MCF 10A (cell line): ENCODE measurements at regions of chr2 and their contacts with region 1.

Region 1: GRCh38 chr2:68157402-68158133 is at the start of gene PNO1:
- DNase-seq: peak; percentile 95
- H3K4me3 Mint-ChIP-seq: peak within 1 kb of the TSS; percentile 98
- H3K27ac Mint-ChIP-seq: peak within 1 kb of the TSS; percentile 100
- H3K4me1 Mint-ChIP-seq: peaks cover 12% of the 10 kb centered on the region
- H3K27me3 Mint-ChIP-seq: no peaks in the 10 kb centered on the region
- CTCF ChIP-seq: no peak
- total RNA-seq, gene PNO1: 27.9 and 35.0 TPM in 2 replicates

Region 2: DNA sequence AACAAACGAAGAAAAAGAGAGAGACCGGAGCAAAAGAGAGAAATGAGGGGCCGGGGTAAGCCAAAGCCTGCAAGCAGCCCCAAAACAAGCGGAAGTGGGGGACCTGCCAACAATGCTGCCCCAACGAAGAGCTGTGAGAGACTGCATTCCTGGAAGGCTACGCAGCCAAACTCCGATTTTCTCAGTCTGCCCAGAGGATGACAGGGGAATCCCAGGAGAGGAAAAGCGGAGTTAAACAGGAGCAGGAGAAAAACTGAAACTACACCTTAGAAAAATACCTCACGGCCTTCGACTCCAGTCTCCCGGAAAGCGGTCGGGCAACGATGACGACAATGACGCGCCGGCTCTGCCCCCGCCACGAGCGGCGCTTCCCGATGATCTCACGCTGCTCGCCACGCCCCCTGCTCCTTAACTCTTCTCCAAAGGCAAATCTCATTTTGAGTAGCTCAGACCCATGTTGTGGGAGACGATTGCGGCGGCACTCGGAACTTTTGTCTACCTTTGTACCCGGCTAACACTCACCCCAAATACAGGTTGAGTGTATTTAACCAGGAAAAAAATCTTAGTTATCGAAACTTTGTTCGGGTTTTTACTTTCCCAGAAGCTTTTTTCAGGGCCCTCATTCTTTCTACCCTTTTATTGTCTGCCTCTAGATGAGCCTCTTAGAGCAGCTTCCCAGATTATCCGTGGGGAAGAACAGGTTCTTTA is 94.7 kb before region 1 on chr2 and contains the start of gene C1D:
- CTCF ChIA-PET with region 1: no interaction called
- POLR2A ChIA-PET with region 1: interaction called, 12 read pairs
- intact Hi-C with region 1: loop called (anchors 1 kb)
- DNase-seq: peak; percentile 89
- H3K4me3 Mint-ChIP-seq: peak within 1 kb of the TSS; percentile 89
- H3K27ac Mint-ChIP-seq: peak within 1 kb of the TSS; percentile 98
- H3K4me1 Mint-ChIP-seq: peaks cover 23% of the 10 kb centered on the region
- H3K27me3 Mint-ChIP-seq: peaks cover 26% of the 10 kb centered on the region
- CTCF ChIP-seq: no peak
- total RNA-seq, gene C1D: 17.4 and 22.4 TPM in 2 replicates

Region 3: GRCh38 chr2:68169297-68169696 is 11.7 kb after region 1 on chr2:
- CTCF ChIA-PET with region 1: interaction called, 13 read pairs
- POLR2A ChIA-PET with region 1: interaction called, 32 read pairs
- intact Hi-C with region 1: no loop called
- DNase-seq: no peak
- H3K4me3 Mint-ChIP-seq: no peak overlapping the region
- H3K27ac Mint-ChIP-seq: no peak overlapping the region
- H3K4me1 Mint-ChIP-seq: peaks cover 13% of the 10 kb centered on the region
- H3K27me3 Mint-ChIP-seq: no peaks in the 10 kb centered on the region
- CTCF ChIP-seq: no peak

Region 4: DNA sequence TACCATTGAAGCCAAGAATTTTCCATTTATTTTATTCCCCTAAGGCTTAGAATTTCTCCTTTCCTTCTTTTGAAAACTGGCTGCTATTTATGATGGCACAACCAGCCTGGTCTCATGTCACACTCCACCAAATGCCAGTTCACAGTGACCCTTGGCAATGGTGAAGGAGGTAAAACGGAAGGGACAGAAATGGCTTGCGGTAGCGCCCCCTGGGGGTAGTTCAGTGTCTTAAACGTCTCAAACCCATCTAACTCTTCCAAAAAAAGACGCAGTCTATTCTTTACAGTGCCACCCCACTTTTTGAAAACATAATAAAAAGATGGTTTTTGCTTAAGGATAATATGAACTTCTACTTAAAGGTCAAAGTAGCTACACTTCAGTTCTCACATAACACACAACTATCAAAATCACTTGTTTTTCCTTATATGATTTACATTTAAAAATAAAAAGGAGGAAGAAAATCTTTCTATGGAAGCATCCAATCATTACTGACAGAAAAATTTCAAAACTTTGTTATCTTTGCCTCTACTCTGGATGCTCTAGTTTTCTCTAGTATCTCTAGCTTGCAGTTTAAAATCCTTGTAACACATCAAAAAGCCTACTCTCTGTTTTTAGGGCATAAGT is 28.1 kb after region 1 on chr2:
- CTCF ChIA-PET with region 1: interaction called, 10 read pairs
- POLR2A ChIA-PET with region 1: interaction called, 4 read pairs
- intact Hi-C with region 1: loop called (anchors 5 kb)
- DNase-seq: peak; percentile 58
- H3K4me3 Mint-ChIP-seq: no peak overlapping the region
- H3K27ac Mint-ChIP-seq: no peak overlapping the region
- H3K4me1 Mint-ChIP-seq: peaks cover 7% of the 10 kb centered on the region
- H3K27me3 Mint-ChIP-seq: no peaks in the 10 kb centered on the region
- CTCF ChIP-seq: peak; percentile 67

Region 5: DNA sequence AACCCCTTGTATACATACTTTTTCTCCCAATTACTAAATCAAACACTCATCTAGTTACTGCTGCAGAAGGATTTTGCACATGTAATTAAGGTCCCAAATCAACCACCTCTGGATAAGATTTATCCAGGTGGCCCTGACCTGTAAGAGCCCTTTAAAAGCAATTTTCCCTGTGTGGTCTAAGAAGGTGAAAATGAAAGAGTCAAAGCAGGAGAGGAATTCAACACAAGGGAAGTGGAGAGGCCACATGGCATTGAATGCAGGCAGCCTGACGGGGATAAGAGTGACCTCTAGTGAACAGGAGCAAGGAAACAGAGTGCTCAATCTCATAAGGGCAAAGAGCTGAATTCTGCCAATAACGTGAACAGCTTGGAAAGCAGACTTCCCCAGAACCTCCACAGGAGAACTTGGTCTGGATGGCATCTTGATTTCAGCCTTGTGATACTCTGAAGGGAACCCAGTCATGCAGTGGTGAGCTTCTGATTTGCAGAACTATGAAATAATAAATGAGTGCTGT is 67.6 kb after region 1 on chr2:
- CTCF ChIA-PET with region 1: interaction called, 3 read pairs
- POLR2A ChIA-PET with region 1: interaction called, 10 read pairs
- intact Hi-C with region 1: loop called (anchors 2 kb)
- DNase-seq: peak; percentile 78
- H3K4me3 Mint-ChIP-seq: peak overlapping the region; percentile 56
- H3K27ac Mint-ChIP-seq: peak overlapping the region; percentile 74
- H3K4me1 Mint-ChIP-seq: peaks cover 28% of the 10 kb centered on the region
- H3K27me3 Mint-ChIP-seq: no peaks in the 10 kb centered on the region
- CTCF ChIP-seq: peak; percentile 34

Region 6: DNA sequence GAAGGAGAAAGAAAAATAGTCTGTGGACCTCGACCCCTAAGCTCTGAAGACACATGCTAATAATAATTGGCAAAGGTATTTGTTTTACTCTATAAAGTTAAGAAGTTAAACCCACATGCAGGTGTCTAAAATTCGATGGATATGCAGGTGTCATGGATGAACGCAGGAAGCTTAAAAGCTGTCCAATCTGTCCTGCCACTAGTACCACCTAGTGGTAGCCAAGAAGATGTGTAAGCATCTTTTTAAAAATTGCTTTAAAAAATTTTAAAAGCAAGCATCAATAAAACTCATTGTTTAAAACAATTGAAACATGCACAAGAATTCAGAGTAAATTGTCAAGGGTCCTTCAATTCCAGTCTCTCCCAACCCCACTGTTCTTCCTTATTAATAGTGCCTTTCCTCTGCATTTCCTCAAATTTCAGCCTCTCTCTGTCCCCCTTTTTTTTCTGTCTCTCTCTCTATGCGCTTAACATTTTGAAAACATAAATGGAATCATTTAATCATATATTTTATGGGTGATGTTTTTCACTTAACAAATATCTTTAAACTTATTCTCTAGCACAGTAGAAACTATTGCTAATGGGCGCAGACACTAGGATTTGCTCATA is 125.3 kb after region 1 on chr2:
- CTCF ChIA-PET with region 1: interaction called, 4 read pairs
- POLR2A ChIA-PET with region 1: interaction called, 20 read pairs
- intact Hi-C with region 1: no loop called
- DNase-seq: peak; percentile 60
- H3K4me3 Mint-ChIP-seq: no peak overlapping the region
- H3K27ac Mint-ChIP-seq: no peak overlapping the region
- H3K4me1 Mint-ChIP-seq: peaks cover 29% of the 10 kb centered on the region
- H3K27me3 Mint-ChIP-seq: no peaks in the 10 kb centered on the region
- CTCF ChIP-seq: peak; percentile 76

Region 7: GRCh38 chr2:68441179-68441993 is 283.8 kb after region 1 on chr2:
- CTCF ChIA-PET with region 1: interaction called, 12 read pairs
- POLR2A ChIA-PET with region 1: interaction called, 3 read pairs
- intact Hi-C with region 1: no loop called
- DNase-seq: peak; percentile 92
- H3K4me3 Mint-ChIP-seq: no peak overlapping the region
- H3K27ac Mint-ChIP-seq: no peak overlapping the region
- H3K4me1 Mint-ChIP-seq: no peaks in the 10 kb centered on the region
- H3K27me3 Mint-ChIP-seq: no peaks in the 10 kb centered on the region
- CTCF ChIP-seq: peak; percentile 88